ENCODE measurements at regions of chr2 and their contacts with region 1.

Region 1: DNA sequence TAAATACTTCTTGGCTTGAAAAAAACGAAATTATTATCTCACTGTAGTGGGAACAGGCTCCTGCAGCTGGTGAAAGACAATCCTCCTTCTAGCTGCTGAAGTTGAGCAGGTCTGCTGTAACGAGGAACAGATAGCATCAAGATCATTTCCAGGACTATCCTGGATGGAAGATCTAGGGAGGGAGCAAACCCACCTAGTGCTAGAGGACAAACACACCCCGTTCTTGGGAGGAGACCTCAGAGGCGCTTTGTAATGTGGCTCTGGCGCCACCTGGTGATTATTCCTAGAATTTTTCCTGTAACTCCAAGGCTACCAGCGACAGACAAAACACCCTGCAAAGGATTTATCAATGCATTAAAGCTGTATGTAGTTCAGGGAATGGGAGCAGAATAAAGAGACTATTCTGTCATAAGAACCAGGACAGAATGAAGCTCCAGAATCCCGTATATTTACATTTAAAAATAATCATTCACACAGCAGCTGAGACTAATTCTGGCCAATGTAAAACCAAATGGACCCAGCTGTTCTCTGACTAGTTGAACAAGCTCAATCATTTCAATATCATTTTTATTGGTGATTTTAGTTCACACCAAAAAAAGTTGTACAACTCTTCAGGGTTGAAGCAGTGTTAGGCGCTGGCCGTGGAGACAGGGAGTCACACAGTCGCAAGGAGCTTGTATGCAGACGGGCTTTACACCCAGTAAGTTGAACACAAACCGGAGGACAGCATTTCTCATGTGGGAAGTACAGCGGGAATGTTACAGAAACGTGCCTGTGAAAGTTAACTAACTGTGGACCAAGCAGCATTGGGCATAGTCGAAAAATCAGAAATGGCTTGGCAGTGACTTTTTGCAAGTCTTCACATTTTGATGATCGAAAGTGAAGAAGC is 290.3 kb downstream of the TRIB2 start:
- DNase-seq: peak; percentile 48
- H3K4me3 ChIP-seq: no peak overlapping the region
- H3K27ac ChIP-seq: peak overlapping the region in 3 of 4 donors; percentile 18 to 28 (median 20)
- H3K4me1 ChIP-seq: peaks cover 0 to 15% (median 0%) of the 10 kb centered on the region in 4 donors
- H3K27me3 ChIP-seq: no peaks in the 10 kb centered on the region
- CTCF ChIP-seq: peak; percentile 71 to 90 (median 82)
- EP300 ChIP-seq: no peak
- POLR2A ChIP-seq: no peak

Region 2: GRCh38 chr2:11829947-11830707 is 1176.9 kb before region 1 on chr2:
- in situ Hi-C with region 1: loop called in 2 of 4 experiments (anchors 25 kb)
- intact Hi-C with region 1: no loop called
- DNase-seq: peak; percentile 50
- H3K4me3 ChIP-seq: peak overlapping the region in 2 of 4 donors; percentile 3 to 22
- H3K27ac ChIP-seq: peak overlapping the region; percentile 50 to 79 (median 72)
- H3K4me1 ChIP-seq: peaks cover 8 to 23% (median 20%) of the 10 kb centered on the region in 4 donors
- H3K27me3 ChIP-seq: no peaks in the 10 kb centered on the region
- CTCF ChIP-seq: peak in 2 of 5 experiments; percentile 9 to 10
- EP300 ChIP-seq: no peak
- POLR2A ChIP-seq: no peak

Region 3: DNA sequence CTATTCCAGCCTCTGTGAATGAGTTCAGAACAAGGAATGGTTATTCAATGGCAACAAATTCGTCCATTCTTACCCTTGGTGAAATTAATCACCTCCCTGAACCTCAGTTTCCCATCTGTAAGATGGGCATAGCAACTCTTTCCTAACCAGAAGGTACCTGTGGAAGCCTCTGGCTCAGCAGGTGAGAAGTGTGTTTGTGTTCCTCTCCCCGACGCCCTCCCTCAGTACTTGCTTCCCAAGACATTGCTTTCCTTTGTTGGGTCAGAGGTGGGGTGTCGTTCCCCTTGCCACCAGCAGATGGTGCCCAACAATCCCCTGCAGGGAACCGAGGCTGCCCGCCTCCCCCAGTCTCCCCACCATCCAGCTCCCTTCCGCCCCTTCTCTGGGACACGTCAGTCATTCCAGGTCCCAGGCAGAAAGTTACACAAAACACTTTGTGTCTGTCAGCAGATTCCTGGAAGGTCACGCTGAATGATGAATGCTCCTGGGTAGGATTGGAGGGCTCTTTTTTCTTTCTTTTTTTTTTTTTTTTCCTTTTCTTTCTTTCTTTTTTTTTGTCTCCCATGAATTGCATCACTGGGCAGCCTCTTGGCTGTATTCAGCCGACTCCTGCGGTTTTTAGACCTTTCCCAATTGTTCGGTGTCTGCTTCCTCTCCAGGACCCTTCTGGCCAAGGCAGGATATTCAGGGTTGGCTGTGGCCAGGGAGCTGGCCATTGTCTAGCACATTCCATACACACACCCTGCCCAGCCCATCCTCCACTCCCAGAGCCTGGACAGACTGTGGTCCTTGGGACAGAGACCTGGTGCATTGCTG is 1143.4 kb before region 1 on chr2:
- in situ Hi-C with region 1: loop called in 2 of 4 experiments (anchors 10 kb)
- intact Hi-C with region 1: loop called (anchors 5 kb)
- DNase-seq: peak; percentile 74
- H3K4me3 ChIP-seq: no peak overlapping the region
- H3K27ac ChIP-seq: peak overlapping the region; percentile 13 to 51 (median 26)
- H3K4me1 ChIP-seq: peaks cover 0 to 6% (median 2%) of the 10 kb centered on the region in 4 donors
- H3K27me3 ChIP-seq: no peaks in the 10 kb centered on the region
- CTCF ChIP-seq: peak; percentile 92 to 99 (median 95)
- EP300 ChIP-seq: no peak
- POLR2A ChIP-seq: no peak

Region 4: GRCh38 chr2:12416600-12416999 is 590.5 kb before region 1 on chr2:
- in situ Hi-C with region 1: loop called in 1 of 4 experiments (anchors 25 kb)
- intact Hi-C with region 1: no loop called
- DNase-seq: peak; percentile 19
- H3K4me3 ChIP-seq: no peak overlapping the region
- H3K27ac ChIP-seq: no peak overlapping the region
- H3K4me1 ChIP-seq: no peaks in the 10 kb centered on the region
- H3K27me3 ChIP-seq: no peaks in the 10 kb centered on the region
- CTCF ChIP-seq: peak in 4 of 5 experiments; percentile 17 to 26 (median 19)
- EP300 ChIP-seq: no peak
- POLR2A ChIP-seq: no peak

Region 5: GRCh38 chr2:12903272-12903671 is 103.8 kb before region 1 on chr2:
- in situ Hi-C with region 1: no loop called
- intact Hi-C with region 1: no loop called
- DNase-seq: no peak
- H3K4me3 ChIP-seq: no peak overlapping the region
- H3K27ac ChIP-seq: no peak overlapping the region
- H3K4me1 ChIP-seq: no peaks in the 10 kb centered on the region
- H3K27me3 ChIP-seq: no peaks in the 10 kb centered on the region
- CTCF ChIP-seq: no peak
- EP300 ChIP-seq: no peak
- POLR2A ChIP-seq: no peak

Region 6: GRCh38 chr2:12918835-12919445 is 88.1 kb before region 1 on chr2:
- in situ Hi-C with region 1: no loop called
- intact Hi-C with region 1: no loop called
- DNase-seq: peak; percentile 47
- H3K4me3 ChIP-seq: no peak overlapping the region
- H3K27ac ChIP-seq: peak overlapping the region; percentile 61 to 72 (median 67)
- H3K4me1 ChIP-seq: peaks cover 0 to 9% (median 3%) of the 10 kb centered on the region in 4 donors
- H3K27me3 ChIP-seq: no peaks in the 10 kb centered on the region
- CTCF ChIP-seq: no peak
- EP300 ChIP-seq: no peak
- POLR2A ChIP-seq: no peak